PC-3 (cell line): ENCODE measurements at regions of chr1 and their contacts with region 1.

Region 1: DNA sequence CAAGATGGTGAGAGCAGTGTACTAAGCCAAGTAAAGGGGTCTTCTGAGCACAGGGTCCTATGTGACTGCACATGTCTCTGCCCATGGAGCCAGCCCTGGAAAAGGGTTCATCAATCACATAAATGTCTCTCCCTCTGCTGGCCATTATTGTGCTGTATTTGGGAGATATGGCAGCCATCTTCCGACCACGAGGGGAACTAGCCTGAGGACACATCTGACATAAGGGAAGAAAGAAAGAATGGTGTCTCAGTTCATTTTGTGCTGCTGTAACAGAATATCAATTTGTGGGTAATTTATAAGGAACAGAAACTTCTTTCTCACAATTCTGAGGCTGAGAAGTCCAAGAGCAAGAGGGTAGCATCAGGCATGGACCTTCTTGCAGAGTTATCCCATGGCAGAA is 55.1 kb upstream of the GJA5 start:
- DNase-seq: peak; percentile 15
- ATAC-seq: no peak
- H3K4me3 ChIP-seq: no peak overlapping the region
- H3K27ac ChIP-seq: no peak overlapping the region
- H3K4me1 ChIP-seq: no peaks in the 10 kb centered on the region
- H3K27me3 ChIP-seq: no peaks in the 10 kb centered on the region
- CTCF ChIP-seq: peak; percentile 48

Region 2: GRCh38 chr1:147769106-147769505 is 46.4 kb before region 1 on chr1:
- CTCF ChIA-PET with region 1: no interaction called
- POLR2A ChIA-PET with region 1: no interaction called
- intact Hi-C with region 1: loop called (anchors 5 kb)
- DNase-seq: no peak
- ATAC-seq: no peak
- H3K4me3 ChIP-seq: no peak overlapping the region
- H3K27ac ChIP-seq: no peak overlapping the region
- H3K4me1 ChIP-seq: peaks cover 26% of the 10 kb centered on the region
- H3K27me3 ChIP-seq: no peaks in the 10 kb centered on the region
- CTCF ChIP-seq: no peak

Region 3: DNA sequence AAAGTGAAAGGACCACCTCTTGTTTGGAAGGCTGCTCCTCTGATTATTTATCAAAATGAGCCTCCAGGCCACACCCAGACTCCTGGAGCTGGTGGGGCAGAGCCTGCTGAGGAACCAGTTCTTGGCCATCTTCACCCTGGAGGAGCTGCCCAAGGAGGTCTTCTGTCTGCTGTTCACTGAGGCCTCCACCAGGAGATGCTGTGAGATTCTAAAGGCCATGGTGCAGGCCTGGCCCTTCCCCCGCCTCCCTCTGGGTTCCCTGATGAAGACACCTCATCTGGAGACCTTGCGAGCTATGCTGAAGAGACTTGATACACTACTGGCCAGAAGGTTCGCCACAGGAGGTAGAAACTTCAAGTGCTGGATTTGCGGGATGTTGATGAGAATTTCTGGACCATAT is 25.4 kb after region 1 on chr1:
- CTCF ChIA-PET with region 1: no interaction called
- POLR2A ChIA-PET with region 1: no interaction called
- intact Hi-C with region 1: no loop called
- DNase-seq: no peak
- ATAC-seq: no peak
- H3K4me3 ChIP-seq: no peak overlapping the region
- H3K27ac ChIP-seq: no peak overlapping the region
- H3K4me1 ChIP-seq: peaks cover 6% of the 10 kb centered on the region; the same call in 1 of the 2 replicates
- H3K27me3 ChIP-seq: no peaks in the 10 kb centered on the region
- CTCF ChIP-seq: peak; percentile 36

Region 4: GRCh38 chr1:147882535-147882934 is 67.0 kb after region 1 on chr1:
- CTCF ChIA-PET with region 1: no interaction called
- POLR2A ChIA-PET with region 1: no interaction called
- intact Hi-C with region 1: loop called (anchors 10 kb)
- DNase-seq: peak; percentile 73
- ATAC-seq: peak; percentile 78
- H3K4me3 ChIP-seq: no peak overlapping the region
- H3K27ac ChIP-seq: no peak overlapping the region
- H3K4me1 ChIP-seq: peaks cover 6% of the 10 kb centered on the region
- H3K27me3 ChIP-seq: no peaks in the 10 kb centered on the region
- CTCF ChIP-seq: no peak